HEK293 (cell line): ENCODE measurements at regions of chr3 and their contacts with region 1.

Region 1: GRCh38 chr3:38117748-38118420 is 19.0 kb downstream of the ACAA1 start:
- H3K4me3 ChIP-seq: no peak overlapping the region
- H3K27ac ChIP-seq: no peak overlapping the region
- H3K4me1 ChIP-seq: no peaks in the 10 kb centered on the region
- CTCF ChIP-seq: peak; percentile 69

Region 2: DNA sequence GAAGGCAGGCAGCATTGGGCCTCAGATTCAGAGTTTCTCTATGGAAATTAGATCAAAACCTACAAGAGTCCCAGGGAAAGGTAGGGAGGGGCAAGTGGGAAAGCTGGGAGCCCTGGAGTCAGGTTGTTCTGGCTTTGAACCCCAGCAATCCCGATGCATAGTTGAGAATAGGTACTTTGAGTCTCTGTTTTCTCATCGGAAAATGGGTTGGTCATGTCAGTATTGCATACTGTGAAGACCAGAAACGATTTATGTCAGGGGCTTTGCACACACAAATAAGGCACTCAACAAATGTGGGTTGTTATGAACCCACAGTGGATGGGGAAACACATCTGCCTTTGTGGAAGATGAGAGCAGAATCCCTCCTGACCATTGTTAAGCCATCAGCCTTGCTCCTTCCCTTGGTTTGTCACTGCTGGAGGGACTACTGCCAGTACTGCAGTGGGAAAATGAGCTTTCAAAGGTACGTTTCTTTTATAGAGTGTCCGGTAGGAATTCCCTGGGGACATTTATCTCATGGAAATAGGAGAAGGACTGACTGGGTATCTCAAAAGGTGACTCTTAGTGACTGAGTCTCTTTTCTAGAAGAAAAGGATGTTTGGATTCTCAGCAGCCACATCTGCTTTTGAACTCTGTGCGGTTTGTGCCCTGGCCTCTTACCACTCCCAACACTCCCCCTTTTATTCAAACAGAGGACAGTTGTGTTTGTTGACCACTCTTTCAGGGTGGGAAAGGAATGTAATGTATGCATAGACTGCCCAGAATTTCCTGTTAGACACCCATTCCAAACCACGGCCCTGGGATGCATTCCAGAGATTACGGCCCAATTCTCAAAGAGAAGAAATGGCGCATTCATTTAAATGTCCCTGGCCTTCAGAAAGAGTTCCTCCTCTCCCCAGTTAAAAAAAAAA is 181.9 kb before region 1 on chr3:
- CTCF ChIA-PET with region 1: no interaction called
- POLR2A ChIA-PET with region 1: no interaction called
- H3K4me3 ChIP-seq: no peak overlapping the region
- H3K27ac ChIP-seq: no peak overlapping the region
- H3K4me1 ChIP-seq: no peaks in the 10 kb centered on the region
- CTCF ChIP-seq: no peak

Region 3: GRCh38 chr3:38095669-38096483 is 22.0 kb before region 1 on chr3:
- CTCF ChIA-PET with region 1: no interaction called
- POLR2A ChIA-PET with region 1: no interaction called
- H3K4me3 ChIP-seq: no peak overlapping the region
- H3K27ac ChIP-seq: no peak overlapping the region
- H3K4me1 ChIP-seq: no peaks in the 10 kb centered on the region
- CTCF ChIP-seq: no peak

Region 4: DNA sequence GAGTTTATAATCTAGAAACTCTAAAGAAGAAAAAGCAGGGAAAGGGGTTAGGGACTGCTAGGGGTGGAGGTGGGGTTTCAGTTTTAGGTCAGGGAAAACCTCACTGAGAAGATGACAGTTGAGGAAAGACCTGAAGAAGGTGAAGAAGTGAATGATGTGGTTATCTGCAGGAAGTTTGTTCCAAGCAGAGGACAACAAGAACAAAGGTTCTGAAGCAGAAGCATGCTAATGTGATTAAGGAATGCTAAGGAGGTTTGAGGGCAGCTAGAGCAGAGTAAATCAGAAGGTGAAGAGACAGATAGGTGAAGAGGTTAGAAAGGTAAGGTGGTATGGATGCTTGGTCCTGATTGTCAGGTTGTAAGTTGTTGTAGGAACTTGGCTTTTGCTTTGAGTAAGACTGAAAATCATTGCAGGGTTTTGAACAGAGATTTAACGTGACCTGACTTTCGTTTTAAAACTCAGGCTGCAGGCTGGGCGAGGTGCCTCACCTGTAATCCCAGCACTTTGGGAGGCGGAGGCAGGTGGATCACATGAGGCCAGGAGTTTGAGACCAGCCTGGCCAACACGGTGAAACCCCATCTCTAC is 56.0 kb after region 1 on chr3:
- CTCF ChIA-PET with region 1: no interaction called
- POLR2A ChIA-PET with region 1: no interaction called
- H3K4me3 ChIP-seq: no peak overlapping the region
- H3K27ac ChIP-seq: no peak overlapping the region
- H3K4me1 ChIP-seq: no peaks in the 10 kb centered on the region
- CTCF ChIP-seq: no peak

Region 5: GRCh38 chr3:38247366-38248035 is 129.6 kb after region 1 on chr3:
- CTCF ChIA-PET with region 1: interaction called, 11 read pairs
- POLR2A ChIA-PET with region 1: no interaction called
- H3K4me3 ChIP-seq: no peak overlapping the region
- H3K27ac ChIP-seq: no peak overlapping the region
- H3K4me1 ChIP-seq: no peaks in the 10 kb centered on the region
- CTCF ChIP-seq: no peak

Region 6: GRCh38 chr3:38318766-38319671 is 201.1 kb after region 1 on chr3:
- CTCF ChIA-PET with region 1: no interaction called
- POLR2A ChIA-PET with region 1: no interaction called
- H3K4me3 ChIP-seq: no peak overlapping the region
- H3K27ac ChIP-seq: no peak overlapping the region
- H3K4me1 ChIP-seq: no peaks in the 10 kb centered on the region
- CTCF ChIP-seq: no peak